Activated CD4-positive, alpha-beta memory T cell treated with anti-CD3 and anti-CD28 coated beads for 36 hours (primary cell): ENCODE measurements at regions of chr20 and their contacts with region 1.

Region 1: GRCh38 chr20:32031007-32031958 is 20.8 kb upstream of the HCK start:
- DNase-seq: peak; percentile 67
- H3K4me3 Mint-ChIP-seq: no peak overlapping the region
- H3K27ac Mint-ChIP-seq: no peak overlapping the region
- H3K4me1 Mint-ChIP-seq: no peaks in the 10 kb centered on the region
- H3K27me3 Mint-ChIP-seq: peaks cover 21% of the 10 kb centered on the region

Region 2: GRCh38 chr20:31760519-31761240 is 270.6 kb before region 1 on chr20:
- CTCF ChIA-PET with region 1: no interaction called
- POLR2A ChIA-PET with region 1: no interaction called
- intact Hi-C with region 1: no loop called
- DNase-seq: no peak
- H3K4me3 Mint-ChIP-seq: no peak overlapping the region
- H3K27ac Mint-ChIP-seq: no peak overlapping the region
- H3K4me1 Mint-ChIP-seq: peaks cover 2% of the 10 kb centered on the region
- H3K27me3 Mint-ChIP-seq: no peaks in the 10 kb centered on the region

Region 3: DNA sequence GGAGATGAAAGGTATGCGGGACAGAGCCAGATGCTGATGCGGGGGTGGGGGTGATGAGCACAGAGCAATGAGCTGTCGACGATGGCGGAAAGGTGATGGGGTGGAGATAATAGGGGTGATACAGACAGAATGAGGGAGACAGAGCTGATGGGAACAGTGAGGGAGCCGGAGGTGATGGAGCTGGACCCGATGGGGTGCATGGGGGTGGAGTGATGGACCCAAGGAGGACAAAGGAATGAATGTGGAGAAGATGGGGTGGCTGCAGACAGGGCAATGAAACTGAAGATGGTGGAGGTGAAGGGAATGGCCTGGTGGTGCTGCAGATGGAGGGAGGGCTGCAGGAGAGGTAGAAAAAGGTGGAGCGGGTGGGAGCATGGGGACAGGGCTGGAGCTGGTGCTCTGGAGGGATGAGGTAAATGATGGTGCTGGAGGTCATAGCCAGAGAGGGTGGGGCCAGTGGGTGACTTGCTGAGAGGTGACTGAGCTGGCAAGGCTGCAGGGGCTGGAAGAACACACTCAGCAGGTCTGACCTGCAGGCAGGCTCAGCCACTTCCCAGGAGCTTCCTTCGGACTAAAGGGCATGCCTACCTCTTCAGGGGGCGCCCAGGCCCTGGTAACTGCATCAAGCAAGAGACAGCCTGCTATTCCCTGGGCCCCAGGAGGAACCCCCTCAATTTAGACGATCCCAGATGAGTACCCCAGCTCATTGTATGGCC is 179.9 kb before region 1 on chr20:
- CTCF ChIA-PET with region 1: interaction called, 67 read pairs
- POLR2A ChIA-PET with region 1: no interaction called
- intact Hi-C with region 1: loop called (anchors 2 kb)
- DNase-seq: no peak
- H3K4me3 Mint-ChIP-seq: no peak overlapping the region
- H3K27ac Mint-ChIP-seq: no peak overlapping the region
- H3K4me1 Mint-ChIP-seq: no peaks in the 10 kb centered on the region
- H3K27me3 Mint-ChIP-seq: peaks cover 10% of the 10 kb centered on the region

Region 4: DNA sequence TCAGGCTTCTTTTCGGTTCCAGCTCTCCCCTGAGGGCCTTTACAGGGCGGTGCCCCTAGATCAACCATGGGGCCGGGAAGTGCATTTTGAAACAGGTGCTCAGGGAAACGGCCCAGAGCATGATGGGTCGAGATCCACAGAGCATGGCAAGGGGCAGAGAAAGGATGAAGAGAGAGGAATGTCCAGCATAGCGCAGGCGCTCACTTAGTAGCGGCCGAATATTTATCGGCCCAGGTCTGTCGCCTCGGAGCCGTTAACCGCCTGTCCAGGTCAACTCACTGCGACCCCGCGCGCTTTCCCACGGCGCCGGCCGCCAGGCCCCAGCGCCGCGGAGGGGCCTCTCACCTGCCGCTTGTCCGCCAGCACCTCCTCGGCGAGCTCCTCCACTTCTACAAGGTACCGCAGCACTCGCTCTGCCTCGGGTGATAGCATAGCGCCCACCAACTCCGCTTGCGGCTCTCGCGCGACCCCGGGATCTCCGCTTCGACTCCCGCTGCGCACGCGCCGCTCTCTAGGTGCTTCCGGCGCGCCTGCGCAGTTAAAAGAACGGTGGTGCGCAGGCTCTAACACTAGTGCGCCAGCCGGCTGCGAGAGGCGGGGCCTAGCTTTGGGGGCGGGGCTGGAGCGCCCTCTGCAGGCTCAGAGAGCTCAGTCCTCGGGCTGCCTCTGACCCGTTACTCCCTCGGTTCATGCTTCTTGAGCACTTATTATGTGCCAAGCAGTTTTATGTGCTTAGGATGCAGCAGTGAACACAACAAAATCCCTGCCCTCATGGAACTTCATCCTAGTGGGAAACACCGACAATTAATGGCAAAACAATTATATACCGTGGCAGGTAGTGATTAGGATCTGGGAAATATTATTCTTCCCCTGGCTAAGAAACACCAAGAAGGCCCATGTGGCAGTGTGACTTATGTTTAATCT is 79.5 kb before region 1 on chr20 and contains the start of gene PDRG1:
- CTCF ChIA-PET with region 1: interaction called, 20 read pairs
- POLR2A ChIA-PET with region 1: no interaction called
- intact Hi-C with region 1: loop called (anchors 10 kb)
- DNase-seq: peak; percentile 98
- H3K4me3 Mint-ChIP-seq: peak within 1 kb of the TSS; percentile 97
- H3K27ac Mint-ChIP-seq: peak within 1 kb of the TSS; percentile 90
- H3K4me1 Mint-ChIP-seq: peaks cover 27% of the 10 kb centered on the region
- H3K27me3 Mint-ChIP-seq: peaks cover 8% of the 10 kb centered on the region
- total RNA-seq, gene PDRG1: 12.1 to 13.2 TPM

Region 5: DNA sequence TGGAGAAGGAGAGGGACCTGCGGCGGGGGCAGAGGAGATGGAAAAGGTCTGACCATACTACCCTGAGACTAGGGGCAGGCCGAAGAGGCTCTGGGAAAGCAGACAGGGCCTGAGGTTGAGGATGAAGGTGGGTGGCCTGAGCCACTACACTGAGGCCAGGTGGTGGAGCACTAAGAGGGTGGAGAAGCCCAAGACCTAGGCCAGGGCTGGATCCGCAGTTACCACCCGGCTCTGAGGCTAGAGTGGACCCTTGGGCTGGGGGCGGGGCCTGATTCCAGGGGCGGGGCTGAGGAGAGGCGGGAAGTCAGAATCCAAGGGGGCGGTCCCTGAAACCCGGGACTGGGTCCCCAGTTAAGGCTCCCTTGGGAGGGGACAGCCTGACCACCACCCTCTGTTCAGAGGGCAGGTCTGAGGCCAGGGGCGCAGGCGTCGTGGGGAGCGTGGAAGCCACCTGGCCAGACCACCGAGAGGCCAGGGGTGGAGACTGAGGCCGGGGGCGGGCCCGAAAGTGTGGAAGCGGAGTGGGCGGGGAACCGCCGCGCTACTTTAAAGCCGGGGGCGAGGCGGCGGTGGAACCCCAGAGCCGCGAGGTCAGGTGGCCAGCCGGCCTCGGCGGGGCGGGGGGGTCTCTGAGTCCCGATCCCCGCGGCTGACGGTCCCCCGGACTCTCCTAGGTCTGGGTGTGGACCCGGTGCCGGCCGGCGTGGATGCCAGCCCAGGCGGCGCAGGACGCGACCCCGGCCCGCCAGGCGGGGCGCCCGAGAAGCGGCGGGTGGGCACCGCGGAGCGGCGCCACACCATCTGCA is 12.8 kb before region 1 on chr20:
- CTCF ChIA-PET with region 1: interaction called, 41 read pairs
- POLR2A ChIA-PET with region 1: no interaction called
- intact Hi-C with region 1: no loop called
- DNase-seq: peak; percentile 63
- H3K4me3 Mint-ChIP-seq: peak overlapping the region; percentile 73
- H3K27ac Mint-ChIP-seq: no peak overlapping the region
- H3K4me1 Mint-ChIP-seq: peaks cover 21% of the 10 kb centered on the region
- H3K27me3 Mint-ChIP-seq: peaks cover 49% of the 10 kb centered on the region

Region 6: DNA sequence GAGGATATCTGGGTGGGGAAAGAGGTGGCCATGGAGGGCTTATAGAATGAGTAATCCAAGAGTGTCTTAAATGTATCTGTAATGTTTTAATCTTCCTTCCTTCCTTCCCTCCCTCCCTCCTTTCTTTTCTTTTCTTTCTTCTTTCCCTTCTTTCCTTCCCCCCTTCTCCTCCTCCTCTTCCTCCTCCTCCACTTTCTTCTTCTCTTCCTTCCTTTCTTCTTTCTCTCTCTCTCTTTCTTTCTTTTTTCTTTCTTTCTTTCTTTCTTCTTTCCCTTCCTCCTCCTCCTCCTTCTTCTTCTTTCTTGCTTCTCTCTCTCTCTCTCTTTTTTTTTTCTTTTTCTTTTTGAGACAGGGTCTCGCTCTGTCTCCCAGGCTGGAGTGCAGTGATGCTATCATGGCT is 27.9 kb after region 1 on chr20:
- CTCF ChIA-PET with region 1: no interaction called
- POLR2A ChIA-PET with region 1: no interaction called
- intact Hi-C with region 1: no loop called
- DNase-seq: no peak
- H3K4me3 Mint-ChIP-seq: no peak overlapping the region
- H3K27ac Mint-ChIP-seq: no peak overlapping the region
- H3K4me1 Mint-ChIP-seq: no peaks in the 10 kb centered on the region
- H3K27me3 Mint-ChIP-seq: peaks cover 42% of the 10 kb centered on the region

Region 7: GRCh38 chr20:32091888-32092346 is 60.6 kb after region 1 on chr20:
- CTCF ChIA-PET with region 1: interaction called, 36 read pairs
- POLR2A ChIA-PET with region 1: no interaction called
- intact Hi-C with region 1: loop called (anchors 1 kb)
- DNase-seq: peak; percentile 86
- H3K4me3 Mint-ChIP-seq: no peak overlapping the region
- H3K27ac Mint-ChIP-seq: no peak overlapping the region
- H3K4me1 Mint-ChIP-seq: peaks cover 2% of the 10 kb centered on the region
- H3K27me3 Mint-ChIP-seq: peaks cover 3% of the 10 kb centered on the region

Region 8: GRCh38 chr20:32179515-32179914 is 148.2 kb after region 1 on chr20:
- CTCF ChIA-PET with region 1: no interaction called
- POLR2A ChIA-PET with region 1: no interaction called
- intact Hi-C with region 1: no loop called
- DNase-seq: no peak
- H3K4me3 Mint-ChIP-seq: no peak overlapping the region
- H3K27ac Mint-ChIP-seq: no peak overlapping the region
- H3K4me1 Mint-ChIP-seq: no peaks in the 10 kb centered on the region
- H3K27me3 Mint-ChIP-seq: no peaks in the 10 kb centered on the region